CD4-positive, alpha-beta memory T cell (primary cell): ENCODE measurements at regions of chr14 and their contacts with region 1.

Region 1: DNA sequence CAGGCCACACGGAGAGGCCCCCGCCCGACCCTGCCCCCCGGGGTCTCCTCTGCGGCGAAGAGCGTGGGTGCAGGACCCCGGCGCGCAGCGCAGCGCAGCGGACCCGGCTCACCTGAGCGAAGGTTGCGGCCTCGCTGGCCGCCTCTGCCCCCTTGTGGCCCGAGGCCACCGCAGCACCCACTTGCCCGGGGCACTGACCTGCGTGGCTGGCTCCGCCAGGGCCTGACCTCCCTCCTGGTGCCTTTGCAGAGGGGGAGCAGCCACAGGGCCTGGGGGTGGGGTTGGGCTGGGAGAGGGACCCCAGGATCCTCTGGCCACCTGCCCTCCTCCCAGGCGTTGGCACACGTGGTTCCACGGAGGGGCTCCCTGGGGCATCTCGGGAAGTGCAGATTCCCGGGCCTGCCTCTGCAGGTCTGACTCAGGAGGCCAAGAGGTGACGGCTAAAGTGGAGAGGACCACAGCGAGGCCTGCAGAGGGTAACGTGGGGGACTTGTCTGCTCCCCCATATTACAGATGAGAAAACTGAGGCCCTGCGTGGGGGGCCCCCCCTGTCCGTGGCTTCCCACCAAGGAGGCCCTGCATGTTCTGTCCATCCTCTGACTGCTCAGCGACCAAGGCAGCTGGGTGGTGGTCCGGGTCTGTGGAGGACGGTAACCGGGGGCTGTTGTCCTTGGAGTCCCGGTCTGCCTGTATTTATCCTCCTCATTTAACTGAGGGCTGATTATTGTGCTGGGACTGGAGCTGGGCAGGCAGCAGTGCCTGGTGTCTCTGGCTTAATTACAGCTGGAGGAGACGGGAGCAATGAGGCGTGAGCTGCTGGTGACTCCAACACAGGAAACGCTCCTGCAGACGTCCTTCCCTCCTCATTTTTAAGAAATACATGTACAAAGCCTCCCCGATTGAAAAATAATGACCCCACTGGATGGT is 67.9 kb upstream of the BEGAIN start:
- DNase-seq: peak in 4 of 5 donors; percentile 41 to 45 (median 43)
- H3K4me3 ChIP-seq: no peak overlapping the region
- H3K4me3 Mint-ChIP-seq: no peak overlapping the region
- H3K27ac ChIP-seq: no peak overlapping the region
- H3K27ac Mint-ChIP-seq: no peak overlapping the region
- H3K4me1 ChIP-seq: peaks cover 14% of the 10 kb centered on the region
- H3K4me1 Mint-ChIP-seq: peaks cover 0 to 11% (median 4%) of the 10 kb centered on the region in 4 donors
- H3K27me3 ChIP-seq: peaks cover 4% of the 10 kb centered on the region
- H3K27me3 Mint-ChIP-seq: peaks cover 7 to 15% of the 10 kb centered on the region in 2 donors

Region 2: GRCh38 chr14:100383727-100384158 is 271.3 kb before region 1 on chr14:
- CTCF ChIA-PET with region 1: interaction called, 185 read pairs
- POLR2A ChIA-PET with region 1: interaction called, 3 read pairs
- intact Hi-C with region 1: loop called (anchors 1 kb)
- DNase-seq: peak; percentile 55 to 67 (median 63)
- H3K4me3 ChIP-seq: no peak overlapping the region
- H3K4me3 Mint-ChIP-seq: no peak overlapping the region
- H3K27ac ChIP-seq: no peak overlapping the region
- H3K27ac Mint-ChIP-seq: peak overlapping the region in 1 of 7 donors; percentile 17
- H3K4me1 ChIP-seq: no peaks in the 10 kb centered on the region
- H3K4me1 Mint-ChIP-seq: peaks cover 6 to 12% (median 8%) of the 10 kb centered on the region in 4 donors
- H3K27me3 ChIP-seq: no peaks in the 10 kb centered on the region
- H3K27me3 Mint-ChIP-seq: no peaks in the 10 kb centered on the region

Region 3: DNA sequence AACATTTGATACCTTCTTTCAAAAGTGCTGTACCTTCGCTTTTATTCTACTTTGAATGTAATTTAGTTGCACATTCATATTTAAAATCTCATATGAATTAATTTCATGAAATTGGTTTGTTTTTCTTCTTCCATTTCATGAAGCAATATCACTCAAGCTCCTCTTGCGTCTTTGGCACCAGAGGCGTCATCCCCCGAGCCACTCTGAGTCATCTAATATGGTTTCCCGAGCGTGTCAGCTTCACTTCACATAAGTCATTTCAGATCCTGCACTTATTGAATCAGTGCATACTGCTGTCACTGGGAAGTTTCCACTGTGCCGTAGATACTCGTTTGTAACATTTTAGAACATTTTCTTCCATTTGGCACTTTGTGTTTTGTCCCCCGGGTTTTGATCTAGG is 226.3 kb before region 1 on chr14:
- CTCF ChIA-PET with region 1: no interaction called
- POLR2A ChIA-PET with region 1: no interaction called
- intact Hi-C with region 1: no loop called
- DNase-seq: no peak
- H3K4me3 ChIP-seq: no peak overlapping the region
- H3K4me3 Mint-ChIP-seq: no peak overlapping the region
- H3K27ac ChIP-seq: no peak overlapping the region
- H3K27ac Mint-ChIP-seq: no peak overlapping the region
- H3K4me1 ChIP-seq: peaks cover 11% of the 10 kb centered on the region
- H3K4me1 Mint-ChIP-seq: peaks cover 5 to 12% (median 8%) of the 10 kb centered on the region in 4 donors
- H3K27me3 ChIP-seq: no peaks in the 10 kb centered on the region
- H3K27me3 Mint-ChIP-seq: no peaks in the 10 kb centered on the region

Region 4: DNA sequence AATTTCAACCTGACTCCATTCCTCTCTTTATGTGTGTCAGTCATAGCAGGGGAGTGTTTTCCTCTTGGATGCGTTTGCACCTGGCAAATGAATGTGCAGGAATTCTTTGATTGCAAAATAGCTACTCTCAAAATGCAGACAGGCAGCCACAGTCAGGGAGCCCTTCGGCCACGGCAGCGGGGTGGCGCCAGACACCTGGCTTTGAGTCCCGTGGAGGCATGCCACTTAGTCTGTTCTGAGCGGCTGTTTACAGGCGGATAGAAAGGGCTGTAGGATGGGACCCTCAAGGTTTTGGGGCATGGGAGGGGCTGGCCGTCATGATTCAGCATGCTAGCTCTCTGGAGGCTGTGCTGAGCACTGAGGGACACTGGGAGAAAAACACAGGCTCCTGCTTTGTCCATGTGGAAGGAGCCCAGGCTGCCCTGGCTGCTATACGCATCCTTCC is 214.9 kb before region 1 on chr14:
- CTCF ChIA-PET with region 1: interaction called, 44 read pairs
- POLR2A ChIA-PET with region 1: no interaction called
- intact Hi-C with region 1: loop called (anchors 2 kb)
- DNase-seq: peak in 2 of 5 donors; percentile 30
- H3K4me3 ChIP-seq: no peak overlapping the region
- H3K4me3 Mint-ChIP-seq: no peak overlapping the region
- H3K27ac ChIP-seq: no peak overlapping the region
- H3K27ac Mint-ChIP-seq: no peak overlapping the region
- H3K4me1 ChIP-seq: peaks cover 7% of the 10 kb centered on the region
- H3K4me1 Mint-ChIP-seq: peaks cover 0 to 11% (median 8%) of the 10 kb centered on the region in 4 donors
- H3K27me3 ChIP-seq: no peaks in the 10 kb centered on the region
- H3K27me3 Mint-ChIP-seq: no peaks in the 10 kb centered on the region

Region 5: DNA sequence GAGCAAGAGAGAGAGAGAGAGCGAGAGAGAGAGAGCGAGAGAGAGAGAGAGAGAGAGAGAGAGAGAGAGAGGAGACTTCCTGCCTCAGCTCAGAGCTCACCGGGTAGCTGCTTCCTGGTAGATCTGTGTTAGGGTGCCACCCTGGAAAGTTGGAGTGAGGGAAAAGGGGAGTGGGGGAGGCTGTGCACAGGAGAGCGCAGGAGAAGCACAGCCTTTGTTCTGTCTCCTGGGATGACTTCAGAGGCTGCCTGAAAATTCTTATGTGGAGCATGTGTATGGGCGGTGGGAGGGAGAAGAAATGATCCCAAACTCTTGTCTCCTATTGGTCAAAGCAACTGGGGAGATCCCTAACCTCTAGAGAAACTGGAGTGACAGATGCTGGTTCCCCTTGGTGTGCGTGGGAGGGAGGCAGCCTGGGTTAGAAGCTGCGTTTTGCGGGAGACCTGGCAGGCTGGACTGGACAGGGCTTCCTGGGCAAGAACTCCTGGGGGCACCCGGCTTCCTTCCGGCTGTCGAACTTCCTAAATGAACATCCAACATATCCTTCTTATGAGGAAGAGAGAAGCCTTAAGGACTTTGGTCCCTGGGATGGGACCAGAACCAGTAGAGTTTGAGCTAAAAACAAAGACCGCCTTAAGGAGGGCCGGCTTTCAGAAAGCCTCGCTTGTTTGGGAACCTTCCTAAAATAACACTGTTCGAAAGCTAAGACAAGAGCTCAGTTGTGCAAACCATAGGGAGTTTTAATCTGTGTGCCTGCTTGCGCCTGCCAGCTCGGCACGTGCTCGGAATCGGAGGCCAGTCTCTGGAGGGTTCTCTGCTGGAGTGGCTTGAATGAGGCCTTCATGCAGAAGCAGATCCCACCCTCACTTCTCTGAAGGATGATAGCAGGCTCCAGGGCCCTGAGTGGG is 37.4 kb before region 1 on chr14:
- CTCF ChIA-PET with region 1: interaction called, 10 read pairs
- POLR2A ChIA-PET with region 1: no interaction called
- intact Hi-C with region 1: no loop called
- DNase-seq: peak in 4 of 5 donors; percentile 48 to 51 (median 50)
- H3K4me3 ChIP-seq: no peak overlapping the region
- H3K4me3 Mint-ChIP-seq: peak overlapping the region; percentile 13 to 82 (median 62)
- H3K27ac ChIP-seq: no peak overlapping the region
- H3K27ac Mint-ChIP-seq: peak overlapping the region; percentile 57 to 93 (median 76)
- H3K4me1 ChIP-seq: peaks cover 20% of the 10 kb centered on the region
- H3K4me1 Mint-ChIP-seq: peaks cover 9 to 29% (median 15%) of the 10 kb centered on the region in 4 donors
- H3K27me3 ChIP-seq: no peaks in the 10 kb centered on the region
- H3K27me3 Mint-ChIP-seq: no peaks in the 10 kb centered on the region

Region 6: DNA sequence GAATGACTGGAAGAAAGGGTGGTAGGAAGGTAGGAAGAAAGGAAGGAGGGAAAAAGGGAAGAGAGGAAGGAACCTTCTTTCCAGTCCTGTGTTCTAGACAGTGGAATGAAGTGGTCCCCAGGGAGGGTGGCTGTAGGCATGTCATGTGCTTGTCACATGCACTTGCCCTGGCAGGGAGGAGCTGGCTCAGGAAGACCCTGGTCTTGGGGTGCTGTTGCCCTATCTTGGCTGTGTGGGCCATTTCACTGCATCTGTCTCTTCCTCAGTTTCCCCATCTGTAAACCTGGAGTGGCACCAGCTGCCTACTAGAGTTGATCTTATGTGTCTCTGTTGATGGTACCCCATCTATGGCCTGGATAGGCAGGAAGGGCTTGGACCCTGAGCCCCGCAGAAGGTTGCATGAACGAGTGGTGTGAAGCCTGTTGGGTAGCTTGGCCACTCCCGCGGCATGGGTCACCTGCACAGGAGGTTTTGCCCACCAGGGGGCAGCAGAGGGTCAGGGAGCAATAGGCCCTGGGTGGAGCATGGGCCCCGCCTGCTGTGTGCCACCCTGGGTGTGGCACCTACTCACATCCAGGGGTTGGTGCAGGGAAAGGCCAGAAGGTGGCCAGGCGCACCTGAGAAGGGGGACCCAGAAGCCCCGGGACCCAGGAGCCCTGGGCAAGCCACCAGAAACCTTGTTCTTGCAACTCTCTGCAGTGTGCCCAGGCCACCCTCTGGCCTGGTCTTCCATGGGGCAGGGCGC is 195.9 kb after region 1 on chr14:
- CTCF ChIA-PET with region 1: no interaction called
- POLR2A ChIA-PET with region 1: no interaction called
- intact Hi-C with region 1: no loop called
- DNase-seq: peak; percentile 59 to 71 (median 64)
- H3K4me3 ChIP-seq: no peak overlapping the region
- H3K4me3 Mint-ChIP-seq: peak overlapping the region in 1 of 8 donors; percentile 9
- H3K27ac ChIP-seq: no peak overlapping the region
- H3K27ac Mint-ChIP-seq: no peak overlapping the region
- H3K4me1 ChIP-seq: peaks cover 9% of the 10 kb centered on the region
- H3K4me1 Mint-ChIP-seq: peaks cover 0 to 3% (median 0%) of the 10 kb centered on the region in 4 donors
- H3K27me3 ChIP-seq: no peaks in the 10 kb centered on the region
- H3K27me3 Mint-ChIP-seq: no peaks in the 10 kb centered on the region